ENCODE measurements at regions of chr2 and their contacts with region 1.

Region 1: DNA sequence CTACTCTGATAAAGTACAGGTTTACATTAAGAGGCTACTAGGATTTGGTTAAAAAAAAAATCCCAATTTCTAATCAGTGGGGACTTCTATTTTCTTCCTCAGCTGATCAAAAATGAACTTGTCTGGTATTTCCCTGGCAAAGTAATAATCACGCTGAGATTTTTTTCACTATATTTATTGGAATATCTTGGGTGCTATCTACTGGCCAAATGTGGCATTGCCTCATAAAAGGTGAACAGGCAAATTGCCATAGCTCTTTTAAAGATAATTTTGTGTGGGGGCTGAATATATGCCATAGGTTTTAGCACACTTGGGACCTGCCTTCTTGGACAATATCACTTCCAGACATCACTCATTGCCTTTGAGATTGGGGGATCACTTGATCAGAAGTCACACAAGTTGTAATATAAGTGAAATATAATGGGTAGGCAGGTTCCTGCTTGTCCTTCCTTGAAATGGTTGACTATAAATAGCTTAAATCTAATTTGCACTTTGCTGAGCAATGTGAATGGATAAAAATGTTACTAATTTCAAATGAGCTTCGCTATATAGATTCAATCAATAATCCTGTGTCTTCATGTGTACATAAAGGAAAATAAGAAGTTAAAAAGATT is 7.0 kb upstream of the NXPH2 start:
- DNase-seq: no peak
- ATAC-seq: peak in 1 of 8 donors; percentile 44
- H3K4me3 ChIP-seq: no peak overlapping the region
- H3K27ac ChIP-seq: no peak overlapping the region
- H3K4me1 ChIP-seq: peaks cover 0 to 6% (median 0%) of the 10 kb centered on the region in 9 donors
- H3K27me3 ChIP-seq: peaks cover 0 to 8% (median 2%) of the 10 kb centered on the region in 7 donors
- CTCF ChIP-seq: peak; percentile 47 to 81 (median 70)

Region 2: GRCh38 chr2:137910641-137911040 is 876.5 kb before region 1 on chr2:
- intact Hi-C with region 1: loop called in 8 of 10 experiments (anchors 2 to 10 kb)
- DNase-seq: no peak
- ATAC-seq: no peak
- H3K4me3 ChIP-seq: no peak overlapping the region
- H3K27ac ChIP-seq: no peak overlapping the region
- H3K4me1 ChIP-seq: no peaks in the 10 kb centered on the region
- H3K27me3 ChIP-seq: peaks cover 0 to 4% (median 0%) of the 10 kb centered on the region in 7 donors
- CTCF ChIP-seq: peak; percentile 44 to 80 (median 67)

Region 3: DNA sequence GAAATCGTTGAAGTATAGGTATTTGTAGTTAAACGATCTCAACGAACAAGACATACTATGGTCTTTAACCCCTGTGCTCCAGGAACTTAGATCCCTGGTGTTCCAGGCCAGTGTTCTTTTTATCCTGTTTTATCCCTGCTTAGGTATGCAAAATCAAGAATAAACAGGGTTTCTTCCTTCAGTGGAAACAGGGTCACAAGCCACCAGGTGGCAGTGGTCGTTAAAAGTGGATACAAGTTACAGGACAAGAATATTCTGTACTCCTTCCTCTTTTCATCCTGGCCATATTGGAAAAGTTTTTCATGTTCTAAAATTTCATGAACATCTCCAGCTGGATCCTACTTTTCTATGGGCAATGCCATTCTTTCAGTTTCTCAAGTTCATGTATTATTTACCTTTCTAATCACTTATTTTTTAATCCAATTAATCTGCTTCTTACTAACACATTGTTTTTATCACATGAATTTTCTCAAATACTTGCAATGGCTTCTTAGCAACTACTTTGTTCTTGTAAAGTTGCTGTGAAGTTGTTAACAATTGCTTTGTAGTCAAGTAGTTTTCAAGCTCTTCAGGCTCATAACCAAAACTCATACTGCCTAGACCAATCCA is 839.3 kb before region 1 on chr2:
- intact Hi-C with region 1: loop called in 6 of 10 experiments (anchors 1 to 10 kb)
- DNase-seq: peak; percentile 66 to 69
- ATAC-seq: peak in 6 of 8 donors; percentile 50 to 79 (median 64)
- H3K4me3 ChIP-seq: no peak overlapping the region
- H3K27ac ChIP-seq: no peak overlapping the region
- H3K4me1 ChIP-seq: peaks cover 0 to 3% (median 0%) of the 10 kb centered on the region in 9 donors
- H3K27me3 ChIP-seq: no peaks in the 10 kb centered on the region
- CTCF ChIP-seq: peak; percentile 38 to 80 (median 68)

Region 4: DNA sequence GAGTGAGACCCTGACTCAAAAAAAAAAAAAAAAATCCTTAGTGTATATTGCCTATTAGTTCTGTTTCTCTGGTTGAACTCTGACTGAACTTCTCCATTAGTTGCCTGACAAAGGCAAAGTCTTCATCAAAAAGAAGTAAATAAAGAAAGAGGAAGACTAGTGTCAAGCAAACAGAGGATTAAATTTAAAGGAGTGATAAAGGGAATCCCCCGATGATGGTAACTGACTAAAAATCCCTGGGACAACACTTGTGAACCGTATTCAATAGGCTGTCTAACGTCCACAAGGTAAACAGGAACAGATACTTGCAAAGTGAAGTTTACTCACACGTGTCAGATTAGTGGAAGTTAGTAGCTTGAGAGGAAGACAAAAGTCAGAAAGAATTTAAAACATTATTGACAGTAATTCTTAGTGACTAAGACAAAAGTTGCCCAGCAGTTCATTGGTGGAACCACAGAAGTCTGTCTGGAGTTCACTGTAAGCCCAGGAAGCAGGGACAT is 311.8 kb before region 1 on chr2:
- intact Hi-C with region 1: loop called in 1 of 10 experiments (anchors 10 kb)
- DNase-seq: no peak
- ATAC-seq: no peak
- H3K4me3 ChIP-seq: no peak overlapping the region
- H3K27ac ChIP-seq: no peak overlapping the region
- H3K4me1 ChIP-seq: peaks cover 0 to 14% (median 0%) of the 10 kb centered on the region in 9 donors
- H3K27me3 ChIP-seq: no peaks in the 10 kb centered on the region
- CTCF ChIP-seq: no peak

Region 5: DNA sequence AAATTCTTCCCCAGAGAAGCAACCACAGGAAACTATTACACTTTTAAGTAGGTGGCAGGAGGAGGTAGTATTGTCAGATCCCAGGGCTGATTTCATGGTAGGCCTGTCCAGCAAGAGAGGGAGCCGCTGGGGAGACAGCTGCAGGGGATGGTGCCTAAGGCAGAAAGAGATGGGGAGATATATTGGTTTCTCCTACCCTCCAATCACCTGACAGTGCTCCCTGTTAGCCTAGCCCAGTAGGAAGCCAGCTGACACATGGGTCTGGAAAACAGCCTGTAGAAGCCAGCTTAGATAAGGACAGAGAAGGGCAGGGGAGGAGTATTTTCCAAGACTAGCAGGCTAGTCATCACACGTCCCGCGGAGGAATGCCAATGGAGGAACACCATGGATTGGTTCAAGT is 293.8 kb before region 1 on chr2:
- intact Hi-C with region 1: loop called in 1 of 10 experiments (anchors 10 kb)
- DNase-seq: no peak
- ATAC-seq: peak in 2 of 8 donors; percentile 41 to 57
- H3K4me3 ChIP-seq: no peak overlapping the region
- H3K27ac ChIP-seq: no peak overlapping the region
- H3K4me1 ChIP-seq: peaks cover 0 to 17% (median 0%) of the 10 kb centered on the region in 9 donors
- H3K27me3 ChIP-seq: no peaks in the 10 kb centered on the region
- CTCF ChIP-seq: no peak